Spleen (tissue), 13 donors: ENCODE measurements at regions of chr22 and their contacts with region 1.

Region 1: DNA sequence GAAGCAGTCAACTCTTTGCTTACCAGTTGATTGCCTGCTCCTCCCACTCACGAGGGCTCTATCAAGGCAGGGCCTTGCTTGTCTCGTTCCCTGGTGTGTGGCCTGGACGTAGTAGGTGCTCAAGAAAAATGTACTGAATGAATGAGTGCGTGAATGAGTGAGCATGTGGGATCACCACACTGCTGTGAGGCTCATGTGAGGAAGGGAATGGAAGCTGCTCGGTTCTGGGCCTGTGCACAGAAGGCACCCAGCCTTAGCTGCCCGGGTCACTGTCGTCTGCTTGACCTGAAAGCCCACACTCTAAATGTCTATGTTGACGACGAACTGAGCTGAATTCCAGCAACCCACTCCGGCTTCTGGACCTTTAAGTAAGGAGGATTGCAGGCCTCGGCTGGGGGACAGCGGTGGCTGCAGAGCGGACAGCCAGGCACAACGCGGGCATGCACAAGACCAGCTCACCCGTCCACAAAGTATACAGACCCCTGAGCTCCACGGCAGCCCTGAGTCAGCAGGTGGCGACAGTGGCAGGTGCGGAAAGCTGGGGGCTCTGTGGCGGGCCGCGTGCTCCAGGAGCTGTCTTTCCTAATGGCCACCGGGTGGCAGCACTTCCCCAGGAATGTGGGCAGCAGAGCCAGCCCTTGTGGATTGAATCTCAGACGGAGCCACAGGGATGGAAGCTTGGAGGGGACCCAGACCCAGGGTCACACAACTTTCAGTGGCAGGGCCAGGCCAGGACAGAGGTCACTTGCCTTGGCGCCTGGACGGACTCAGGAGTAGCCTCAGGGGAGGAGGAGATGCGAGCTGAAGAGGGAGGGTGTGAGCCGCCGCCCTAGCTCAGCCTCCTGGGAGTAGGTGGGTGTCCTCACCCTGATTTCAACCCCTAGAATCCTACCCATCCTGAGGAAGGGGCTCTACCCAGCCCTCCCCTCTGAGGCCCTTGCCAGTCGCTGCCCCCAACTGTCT is 5.0 kb upstream of the PICK1 start:
- DNase-seq: peak; percentile 94
- H3K4me3 ChIP-seq: peak overlapping the region in 1 of 8 donors; percentile 6
- H3K27ac ChIP-seq: no peak overlapping the region
- H3K4me1 ChIP-seq: peaks cover 5 to 22% (median 16%) of the 10 kb centered on the region in 6 donors
- H3K27me3 ChIP-seq: peaks cover 0 to 29% (median 0%) of the 10 kb centered on the region in 7 donors
- CTCF ChIP-seq: peak; percentile 81 to 98 (median 93)
- POLR2A ChIP-seq: no peak

Region 2: GRCh38 chr22:38353142-38353629 is 301.0 kb after region 1 on chr22:
- intact Hi-C with region 1: loop called (anchors 5 kb)
- DNase-seq: peak; percentile 94
- H3K4me3 ChIP-seq: no peak overlapping the region
- H3K27ac ChIP-seq: peak overlapping the region in 1 of 8 donors; percentile 13
- H3K4me1 ChIP-seq: peaks cover 0 to 15% (median 8%) of the 10 kb centered on the region in 6 donors
- H3K27me3 ChIP-seq: no peaks in the 10 kb centered on the region
- CTCF ChIP-seq: peak; percentile 93 to 100 (median 98)
- POLR2A ChIP-seq: no peak

Region 3: DNA sequence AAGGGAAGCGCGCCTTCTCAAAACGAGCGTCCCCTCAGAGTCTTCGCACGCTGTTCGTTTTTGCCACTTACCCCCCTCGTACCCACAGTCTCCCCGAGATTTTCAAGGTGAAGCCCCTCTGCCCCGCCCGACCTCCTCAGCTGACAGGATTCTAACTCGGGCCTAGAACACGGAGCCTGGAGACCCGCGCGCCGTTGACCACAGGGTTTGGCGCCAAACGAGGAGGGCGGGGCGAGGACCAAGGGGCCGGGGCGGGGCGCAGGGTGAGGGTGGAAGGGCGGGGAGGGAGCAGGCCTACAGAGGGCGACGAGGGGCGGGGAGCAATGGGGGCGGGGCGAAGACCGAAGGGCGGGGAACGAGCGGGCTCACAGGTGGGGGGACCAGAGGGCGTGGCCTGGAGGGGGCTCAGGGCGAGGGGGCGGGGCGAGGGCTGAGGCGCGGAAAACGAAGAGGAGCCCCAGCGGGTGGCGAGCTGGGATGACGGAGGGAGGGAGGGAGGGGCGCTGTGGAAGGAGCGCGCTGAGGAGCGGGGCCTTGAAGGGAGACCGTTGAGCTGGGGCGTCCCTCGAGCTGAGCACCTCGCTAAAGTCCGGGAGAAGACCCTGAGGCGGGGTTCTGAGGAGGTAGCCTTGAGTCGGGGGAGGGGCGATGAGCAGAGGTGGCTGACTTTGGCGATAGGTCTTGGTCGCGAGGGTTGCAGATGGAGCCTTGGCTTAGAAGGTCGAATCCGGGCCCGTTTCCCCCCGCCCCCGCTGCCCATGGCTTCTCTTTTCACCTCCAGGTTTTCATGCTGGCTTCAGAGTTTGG is 518.0 kb after region 1 on chr22 and contains the start of gene DMC1:
- intact Hi-C with region 1: loop called (anchors 10 kb)
- DNase-seq: peak; percentile 97
- H3K4me3 ChIP-seq: peak within 1 kb of the TSS; percentile 44 to 82 (median 54)
- H3K27ac ChIP-seq: peak within 1 kb of the TSS in 7 of 8 donors; percentile 21 to 80 (median 69)
- H3K4me1 ChIP-seq: peaks cover 0 to 31% (median 21%) of the 10 kb centered on the region in 6 donors
- H3K27me3 ChIP-seq: peaks cover 0 to 8% (median 0%) of the 10 kb centered on the region in 7 donors
- CTCF ChIP-seq: peak in 1 of 11 experiments; percentile 40
- POLR2A ChIP-seq: no peak
- total RNA-seq, gene DMC1: 0.80 to 2.7 (median 2.0) TPM in 4 of 7 donors, not detected in the others